ENCODE measurements at regions of chr6 and their contacts with region 1.

Region 1: GRCh38 chr6:108874470-108875160 is 26.4 kb downstream of the ARMC2 start:
- DNase-seq: no peak
- ATAC-seq: peak; percentile 81
- H3K4me3 Mint-ChIP-seq: peak overlapping the region; percentile 59
- H3K27ac Mint-ChIP-seq: peak overlapping the region; percentile 51
- H3K4me1 Mint-ChIP-seq: peaks cover 44% of the 10 kb centered on the region
- H3K27me3 Mint-ChIP-seq: no peaks in the 10 kb centered on the region
- CTCF ChIP-seq: no peak

Region 2: GRCh38 chr6:108848116-108848868 is 26.3 kb before region 1 on chr6 and contains the start of gene ARMC2:
- CTCF ChIA-PET with region 1: no interaction called
- POLR2A ChIA-PET with region 1: interaction called, 8 read pairs
- intact Hi-C with region 1: loop called (anchors 2 kb)
- DNase-seq: peak; percentile 98
- ATAC-seq: peak; percentile 94
- H3K4me3 Mint-ChIP-seq: peak within 1 kb of the TSS; percentile 86
- H3K27ac Mint-ChIP-seq: peak within 1 kb of the TSS; percentile 83
- H3K4me1 Mint-ChIP-seq: peaks cover 14% of the 10 kb centered on the region
- H3K27me3 Mint-ChIP-seq: peaks cover under 1% of the 10 kb centered on the region
- CTCF ChIP-seq: no peak
- total RNA-seq, gene ARMC2: 3.5 and 4.3 TPM in 2 replicates

Region 3: GRCh38 chr6:108862479-108863191 is 12.0 kb before region 1 on chr6:
- CTCF ChIA-PET with region 1: no interaction called
- POLR2A ChIA-PET with region 1: no interaction called
- intact Hi-C with region 1: loop called (anchors 2 kb)
- DNase-seq: no peak
- ATAC-seq: no peak
- H3K4me3 Mint-ChIP-seq: no peak overlapping the region
- H3K27ac Mint-ChIP-seq: no peak overlapping the region
- H3K4me1 Mint-ChIP-seq: peaks cover 2% of the 10 kb centered on the region
- H3K27me3 Mint-ChIP-seq: no peaks in the 10 kb centered on the region
- CTCF ChIP-seq: no peak

Measured in activated B cell treated with CpG ODN at 0.5 μM for 24 hours (primary cell).